ENCODE measurements at regions of chr7 and their contacts with region 1.

Region 1: GRCh38 chr7:74466196-74466813 is 12.6 kb downstream of the GTF2IRD1 start:
- DNase-seq: no peak
- H3K4me3 ChIP-seq: no peak overlapping the region
- H3K27me3 ChIP-seq: no peaks in the 10 kb centered on the region
- CTCF ChIP-seq: no peak

Region 2: DNA sequence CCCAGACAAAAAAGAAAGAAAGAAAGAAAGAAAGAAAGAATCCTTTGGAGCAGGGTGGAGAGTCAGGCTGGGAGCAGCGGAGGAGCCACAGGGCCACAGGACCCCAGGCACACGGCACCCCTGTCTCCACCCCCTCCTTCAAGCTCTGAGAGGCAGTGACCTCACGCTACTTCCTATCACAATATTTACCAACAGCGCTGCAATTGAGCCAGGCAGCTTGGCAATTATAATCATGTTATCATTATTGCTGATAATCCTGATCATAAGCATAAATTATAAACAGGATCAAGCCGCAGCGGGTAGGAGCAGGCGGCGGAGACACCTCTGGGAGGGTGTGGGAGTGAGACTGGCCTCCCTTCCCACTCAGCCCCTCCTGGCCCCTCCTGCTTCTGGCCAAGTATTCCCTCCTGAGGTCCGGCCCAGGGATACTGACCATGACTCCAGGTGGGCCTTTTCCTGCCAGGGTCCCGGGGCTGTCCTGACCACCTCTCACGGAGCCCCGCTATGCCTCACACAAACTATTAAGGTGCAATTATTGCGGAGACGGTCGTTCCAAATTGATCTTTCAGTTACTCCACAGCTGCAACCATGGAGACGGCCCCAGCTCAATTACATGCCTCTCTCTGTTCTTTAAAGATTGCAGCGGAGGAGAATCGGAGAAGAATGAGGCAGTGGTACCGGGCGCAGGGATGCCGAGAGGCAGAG is 22.6 kb before region 1 on chr7:
- CTCF ChIA-PET with region 1: no interaction called
- POLR2A ChIA-PET with region 1: no interaction called
- DNase-seq: no peak
- H3K4me3 ChIP-seq: no peak overlapping the region
- H3K27me3 ChIP-seq: no peaks in the 10 kb centered on the region
- CTCF ChIP-seq: no peak

Region 3: GRCh38 chr7:74483402-74484336 is 17.4 kb after region 1 on chr7:
- CTCF ChIA-PET with region 1: interaction called, 3 read pairs
- POLR2A ChIA-PET with region 1: interaction called, 14 read pairs
- DNase-seq: peak; percentile 33
- H3K4me3 ChIP-seq: no peak overlapping the region
- H3K27me3 ChIP-seq: no peaks in the 10 kb centered on the region
- CTCF ChIP-seq: no peak

Measured in BJ (cell line).